ENCODE measurements at regions of chr6 and their contacts with region 1.

Region 1: GRCh38 chr6:35522660-35523658 is 10.3 kb upstream of the TULP1 start:
- DNase-seq: peak; percentile 93

Region 2: DNA sequence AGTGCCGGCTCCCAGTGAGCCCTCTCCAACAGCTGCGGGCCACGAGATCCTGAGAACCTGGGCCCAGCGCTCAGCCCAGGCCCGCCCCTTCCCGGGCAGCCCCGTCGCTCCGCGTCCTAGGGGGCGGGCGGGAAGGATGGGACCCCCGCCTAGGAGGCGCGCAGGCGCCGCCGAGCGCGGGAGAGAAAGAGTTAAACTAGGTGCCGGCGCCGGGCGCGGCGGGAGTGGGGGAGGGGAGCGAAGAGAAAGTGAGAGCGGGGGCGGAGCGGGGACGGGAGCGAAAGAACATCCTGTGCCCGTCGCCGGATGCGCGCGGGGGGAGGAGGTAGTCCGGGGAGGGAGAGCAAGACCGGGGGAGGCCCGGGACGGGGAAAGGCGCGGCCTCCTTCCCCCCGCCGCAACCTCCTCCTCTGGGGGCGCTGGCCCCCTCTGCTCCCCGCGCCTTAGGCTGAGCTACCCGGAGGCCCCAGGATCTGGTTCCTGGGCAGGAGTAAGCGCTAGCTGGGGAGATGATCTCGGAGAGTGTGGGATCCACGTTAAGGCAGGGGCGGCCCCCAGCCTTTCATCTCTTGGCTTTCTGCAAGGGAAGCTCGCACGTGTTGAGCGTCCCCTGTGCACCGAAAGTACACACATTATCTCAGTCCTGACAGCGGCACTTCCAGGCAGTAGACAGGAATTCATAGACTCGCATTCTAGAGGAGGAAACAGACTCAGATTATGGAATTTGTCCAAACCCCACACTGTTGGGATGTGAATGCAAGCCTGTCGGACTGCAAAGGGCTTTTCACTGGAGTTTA is 209.0 kb after region 1 on chr6:
- intact Hi-C with region 1: loop called (anchors 5 kb)
- DNase-seq: peak; percentile 99

Measured in posterior vena cava (tissue), 2 donors.